Prostate gland (tissue), 2 donors: ENCODE measurements at regions of chr6 and their contacts with region 1.

Region 1: DNA sequence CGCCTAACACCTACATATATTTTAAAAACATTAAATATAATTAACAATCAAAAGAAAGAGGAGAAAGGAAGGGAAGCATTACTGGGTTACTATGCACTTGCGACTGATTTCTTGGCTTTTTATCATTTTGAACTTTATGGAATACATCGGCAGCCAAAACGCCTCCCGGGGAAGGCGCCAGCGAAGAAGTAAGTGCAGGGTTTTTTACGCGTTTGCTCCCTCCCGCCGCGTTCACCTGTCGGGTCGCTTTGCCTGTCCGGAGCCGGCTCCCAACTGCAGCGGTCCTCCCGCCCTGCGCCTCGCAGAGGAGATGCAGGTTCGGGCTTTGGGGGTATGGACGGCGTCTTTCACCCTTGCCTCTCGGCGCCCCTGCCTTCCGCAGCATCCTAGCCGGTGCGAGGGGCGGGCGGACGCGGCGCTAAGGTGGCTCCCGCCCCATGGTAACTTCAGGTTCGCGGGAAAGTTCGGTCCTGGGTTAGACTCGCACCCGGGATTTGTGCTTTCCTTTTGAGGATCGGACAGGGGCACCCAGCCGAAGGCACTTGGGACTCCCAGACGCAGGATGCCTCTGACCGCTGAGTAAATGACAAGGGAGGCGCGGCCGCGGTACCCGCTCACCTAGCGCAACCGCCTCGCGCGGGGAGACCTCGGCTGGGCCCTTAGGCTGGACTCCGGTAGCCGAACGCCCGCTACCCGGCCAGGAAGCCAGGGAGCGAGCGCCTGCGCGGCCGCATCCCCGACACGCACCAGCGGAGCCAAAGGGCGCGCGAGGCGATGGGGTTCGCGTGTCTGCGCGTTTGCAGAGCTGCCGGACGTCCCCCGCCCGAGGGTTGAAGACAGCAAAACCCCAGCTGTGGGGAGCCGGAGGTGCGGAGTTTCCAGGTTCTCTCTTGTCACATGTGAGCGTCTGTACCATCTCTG is 891 bp downstream of the RSPO3 start:
- DNase-seq: no peak
- H3K4me3 ChIP-seq: peak overlapping the region; percentile 37 to 40
- H3K27ac ChIP-seq: peak overlapping the region; percentile 45
- H3K4me1 ChIP-seq: no peaks in the 10 kb centered on the region
- H3K27me3 ChIP-seq: peaks cover 5% of the 10 kb centered on the region
- CTCF ChIP-seq: no peak
- POLR2A ChIP-seq: no peak

Region 2: GRCh38 chr6:125995972-125996580 is 1123.3 kb before region 1 on chr6:
- intact Hi-C with region 1: loop called (anchors 10 kb)
- DNase-seq: peak; percentile 26
- H3K4me3 ChIP-seq: no peak overlapping the region
- H3K27ac ChIP-seq: no peak overlapping the region
- H3K4me1 ChIP-seq: no peaks in the 10 kb centered on the region
- H3K27me3 ChIP-seq: no peaks in the 10 kb centered on the region
- CTCF ChIP-seq: peak; percentile 77 to 91 (median 86)
- POLR2A ChIP-seq: no peak

Region 3: GRCh38 chr6:126033696-126034095 is 1085.7 kb before region 1 on chr6:
- intact Hi-C with region 1: loop called (anchors 10 kb)
- DNase-seq: peak; percentile 27
- H3K4me3 ChIP-seq: no peak overlapping the region
- H3K27ac ChIP-seq: no peak overlapping the region
- H3K4me1 ChIP-seq: no peaks in the 10 kb centered on the region
- H3K27me3 ChIP-seq: no peaks in the 10 kb centered on the region
- CTCF ChIP-seq: peak; percentile 26 to 69 (median 42)
- POLR2A ChIP-seq: no peak

Region 4: GRCh38 chr6:126804332-126805064 is 314.9 kb before region 1 on chr6:
- intact Hi-C with region 1: loop called (anchors 10 kb)
- DNase-seq: peak; percentile 5
- H3K4me3 ChIP-seq: no peak overlapping the region
- H3K27ac ChIP-seq: no peak overlapping the region
- H3K4me1 ChIP-seq: no peaks in the 10 kb centered on the region
- H3K27me3 ChIP-seq: no peaks in the 10 kb centered on the region
- CTCF ChIP-seq: peak in 3 of 4 experiments; percentile 55 to 68 (median 65)
- POLR2A ChIP-seq: no peak